Activated CD8-positive, alpha-beta T cell treated with anti-CD3 and anti-CD28 coated beads, Interleukin-2, amount 10 ng/mL, durations not matched to agents 7 days and 5 days (primary cell): ENCODE measurements at regions of chr16 and their contacts with region 1.

Region 1: GRCh38 chr16:49592546-49593423 is 219.2 kb downstream of the C16orf78 start:
- DNase-seq: peak; percentile 56
- ATAC-seq: peak; percentile 83
- H3K4me3 Mint-ChIP-seq: no peak overlapping the region
- H3K27ac Mint-ChIP-seq: no peak overlapping the region
- H3K4me1 Mint-ChIP-seq: peaks cover 6% of the 10 kb centered on the region
- H3K27me3 Mint-ChIP-seq: peaks cover 15% of the 10 kb centered on the region

Region 2: GRCh38 chr16:49407873-49408550 is 184.8 kb before region 1 on chr16:
- CTCF ChIA-PET with region 1: interaction called, 15 read pairs
- POLR2A ChIA-PET with region 1: no interaction called
- DNase-seq: peak; percentile 71
- ATAC-seq: peak; percentile 92
- H3K4me3 Mint-ChIP-seq: no peak overlapping the region
- H3K27ac Mint-ChIP-seq: no peak overlapping the region
- H3K4me1 Mint-ChIP-seq: no peaks in the 10 kb centered on the region
- H3K27me3 Mint-ChIP-seq: peaks cover 3% of the 10 kb centered on the region

Region 3: DNA sequence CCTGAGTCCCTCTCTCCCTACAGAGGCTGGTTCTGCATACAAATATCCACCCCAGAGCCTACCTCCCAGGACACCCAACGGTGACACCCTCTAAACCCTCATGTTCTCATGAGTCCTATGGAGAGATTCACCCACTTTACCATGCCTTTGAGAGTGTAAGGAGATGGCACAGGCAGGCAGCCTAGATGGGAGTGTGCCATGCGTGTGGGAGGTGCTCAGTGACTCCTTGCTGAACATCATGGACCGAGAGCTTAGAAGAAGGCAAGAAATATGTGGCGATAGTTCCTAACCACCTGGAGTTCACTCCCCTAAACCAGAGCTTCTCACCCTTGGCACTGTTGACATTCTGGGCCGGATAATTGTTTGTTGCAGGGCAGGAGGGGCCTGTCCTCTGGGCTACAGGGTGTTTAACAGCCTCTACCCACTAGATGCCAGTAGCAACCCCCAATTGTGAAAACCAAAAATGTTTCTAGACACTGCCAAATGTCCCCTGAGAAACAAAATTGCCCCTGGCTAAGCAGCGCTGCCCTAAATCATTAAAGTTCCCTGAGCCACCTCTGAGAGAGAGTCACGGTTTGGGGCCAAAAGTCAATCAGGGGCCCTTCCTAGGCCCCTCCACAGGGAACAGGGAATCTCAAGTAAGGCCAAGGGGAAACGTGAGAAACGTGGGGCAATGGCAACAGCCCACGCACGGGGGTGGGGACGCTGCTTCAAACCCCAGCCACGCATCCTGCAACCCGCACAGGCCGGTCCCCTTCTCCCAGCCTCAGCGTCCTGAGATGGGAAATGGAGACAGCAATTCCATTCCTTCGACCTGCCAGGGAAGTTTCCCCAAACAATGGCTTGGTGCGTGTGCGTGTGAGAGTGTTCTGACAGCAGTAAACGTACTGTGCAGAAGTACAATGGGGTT is 152.4 kb before region 1 on chr16:
- CTCF ChIA-PET with region 1: interaction called, 11 read pairs
- POLR2A ChIA-PET with region 1: no interaction called
- DNase-seq: no peak
- ATAC-seq: no peak
- H3K4me3 Mint-ChIP-seq: no peak overlapping the region
- H3K27ac Mint-ChIP-seq: peak overlapping the region; percentile 82
- H3K4me1 Mint-ChIP-seq: peaks cover 31% of the 10 kb centered on the region
- H3K27me3 Mint-ChIP-seq: no peaks in the 10 kb centered on the region

Region 4: DNA sequence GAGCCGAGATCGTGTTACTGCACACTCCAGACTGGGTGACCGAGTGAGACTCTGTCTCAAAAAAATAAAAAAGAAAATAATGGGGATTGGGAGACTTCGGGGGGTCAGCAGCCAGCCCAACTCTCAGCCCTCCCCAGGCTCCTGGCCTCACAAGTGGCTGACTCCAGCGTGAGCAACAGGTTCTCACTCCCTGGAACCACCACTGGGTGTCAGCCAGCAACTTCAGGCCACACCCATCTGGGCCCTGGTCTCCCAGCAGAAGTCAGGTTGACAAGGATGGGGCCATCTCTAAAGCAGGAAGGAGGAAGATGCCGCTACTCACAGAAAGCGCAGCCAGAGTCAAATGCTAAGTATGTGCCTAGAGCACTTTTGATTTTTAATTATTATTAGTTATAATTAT is 79.7 kb before region 1 on chr16:
- CTCF ChIA-PET with region 1: no interaction called
- POLR2A ChIA-PET with region 1: no interaction called
- DNase-seq: no peak
- ATAC-seq: no peak
- H3K4me3 Mint-ChIP-seq: no peak overlapping the region
- H3K27ac Mint-ChIP-seq: no peak overlapping the region
- H3K4me1 Mint-ChIP-seq: no peaks in the 10 kb centered on the region
- H3K27me3 Mint-ChIP-seq: no peaks in the 10 kb centered on the region